ENCODE measurements at regions of chr6 and their contacts with region 1.

Region 1: DNA sequence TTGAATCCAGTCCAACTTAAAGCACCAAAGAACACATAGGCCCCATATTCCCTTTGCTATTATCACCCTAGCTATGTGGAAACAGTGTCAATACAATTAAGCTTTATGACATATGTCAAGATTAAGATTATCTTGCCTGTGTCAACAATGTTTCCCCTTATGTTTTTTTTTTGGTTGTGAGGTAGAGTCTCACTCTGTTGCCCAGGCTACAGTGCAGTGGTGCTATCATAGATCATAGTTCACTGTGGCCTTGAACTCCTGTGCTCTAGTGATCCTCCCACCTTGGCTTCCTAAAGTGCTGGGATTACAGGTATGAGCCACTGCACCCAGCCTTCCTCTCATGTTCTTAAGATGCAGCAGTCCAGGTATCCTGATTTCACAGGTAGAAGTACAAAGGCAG is 17.8 kb downstream of the AFG1L start:
- DNase-seq: peak in 1 of 2 experiments; percentile 25
- H3K4me3 ChIP-seq: no peak overlapping the region
- H3K4me3 Mint-ChIP-seq: no peak overlapping the region
- H3K27ac Mint-ChIP-seq: no peak overlapping the region
- H3K4me1 ChIP-seq: peaks cover 14% of the 10 kb centered on the region
- H3K4me1 Mint-ChIP-seq: peaks cover 8% of the 10 kb centered on the region
- H3K27me3 ChIP-seq: no peaks in the 10 kb centered on the region
- H3K27me3 Mint-ChIP-seq: no peaks in the 10 kb centered on the region
- CTCF ChIP-seq: no peak

Region 2: DNA sequence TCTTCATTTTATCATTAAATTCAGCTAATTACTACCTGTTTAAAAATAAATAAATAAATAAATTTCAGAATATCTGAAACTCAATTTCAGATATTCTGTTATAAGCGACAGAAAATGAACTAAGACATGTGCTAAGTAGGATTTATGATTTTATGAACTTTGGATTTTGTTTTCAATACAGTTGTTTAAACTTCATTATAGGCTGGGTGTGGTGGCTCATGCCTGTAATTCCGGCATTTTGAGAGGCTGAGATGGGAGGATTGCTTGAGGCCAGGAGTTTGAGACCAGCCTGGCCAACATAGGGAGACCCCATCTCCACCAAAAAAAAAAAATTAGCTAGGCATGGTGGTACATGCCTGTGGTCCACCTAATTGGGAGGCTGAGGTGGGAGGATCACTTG is 18.2 kb after region 1 on chr6:
- CTCF ChIA-PET with region 1: no interaction called
- POLR2A ChIA-PET with region 1: no interaction called
- intact Hi-C with region 1: loop called (anchors 1 kb)
- DNase-seq: no peak
- H3K4me3 ChIP-seq: no peak overlapping the region
- H3K4me3 Mint-ChIP-seq: no peak overlapping the region
- H3K27ac Mint-ChIP-seq: no peak overlapping the region
- H3K4me1 ChIP-seq: peaks cover 9% of the 10 kb centered on the region; the same call in 1 of the 2 replicates
- H3K4me1 Mint-ChIP-seq: no peaks in the 10 kb centered on the region
- H3K27me3 ChIP-seq: no peaks in the 10 kb centered on the region
- H3K27me3 Mint-ChIP-seq: no peaks in the 10 kb centered on the region
- CTCF ChIP-seq: no peak